Heart left ventricle (tissue), 16 donors: ENCODE measurements at regions of chr7 and their contacts with region 1.

Region 1: GRCh38 chr7:51263631-51264484 is 52.8 kb downstream of the COBL start:
- DNase-seq: no peak
- ATAC-seq: peak; percentile 43 to 80 (median 62)
- H3K4me3 ChIP-seq: no peak overlapping the region
- H3K27ac ChIP-seq: peak overlapping the region in 10 of 12 donors; percentile 20 to 72 (median 62)
- H3K4me1 ChIP-seq: peaks cover 0 to 41% (median 6%) of the 10 kb centered on the region in 12 donors
- H3K27me3 ChIP-seq: no peaks in the 10 kb centered on the region
- CTCF ChIP-seq: no peak
- POLR2A ChIP-seq: no peak

Region 2: GRCh38 chr7:50782384-50783208 is 481.3 kb before region 1 on chr7 and contains the start of gene GRB10:
- intact Hi-C with region 1: no loop called
- DNase-seq: peak in 4 of 5 donors; percentile 34 to 51 (median 48)
- ATAC-seq: peak; percentile 32 to 87 (median 69)
- H3K4me3 ChIP-seq: peak within 1 kb of the TSS; percentile 29 to 70 (median 58)
- H3K27ac ChIP-seq: peak within 1 kb of the TSS in 6 of 12 donors; percentile 39 to 61 (median 52)
- H3K4me1 ChIP-seq: peaks cover 0 to 63% (median 36%) of the 10 kb centered on the region in 12 donors
- H3K27me3 ChIP-seq: peaks cover 0 to 6% (median 0%) of the 10 kb centered on the region in 9 donors
- CTCF ChIP-seq: peak in 10 of 12 donors; percentile 16 to 52 (median 34)
- POLR2A ChIP-seq: no peak
- total RNA-seq, gene GRB10: 20.4 to 38.2 (median 29.1) TPM

Region 3: DNA sequence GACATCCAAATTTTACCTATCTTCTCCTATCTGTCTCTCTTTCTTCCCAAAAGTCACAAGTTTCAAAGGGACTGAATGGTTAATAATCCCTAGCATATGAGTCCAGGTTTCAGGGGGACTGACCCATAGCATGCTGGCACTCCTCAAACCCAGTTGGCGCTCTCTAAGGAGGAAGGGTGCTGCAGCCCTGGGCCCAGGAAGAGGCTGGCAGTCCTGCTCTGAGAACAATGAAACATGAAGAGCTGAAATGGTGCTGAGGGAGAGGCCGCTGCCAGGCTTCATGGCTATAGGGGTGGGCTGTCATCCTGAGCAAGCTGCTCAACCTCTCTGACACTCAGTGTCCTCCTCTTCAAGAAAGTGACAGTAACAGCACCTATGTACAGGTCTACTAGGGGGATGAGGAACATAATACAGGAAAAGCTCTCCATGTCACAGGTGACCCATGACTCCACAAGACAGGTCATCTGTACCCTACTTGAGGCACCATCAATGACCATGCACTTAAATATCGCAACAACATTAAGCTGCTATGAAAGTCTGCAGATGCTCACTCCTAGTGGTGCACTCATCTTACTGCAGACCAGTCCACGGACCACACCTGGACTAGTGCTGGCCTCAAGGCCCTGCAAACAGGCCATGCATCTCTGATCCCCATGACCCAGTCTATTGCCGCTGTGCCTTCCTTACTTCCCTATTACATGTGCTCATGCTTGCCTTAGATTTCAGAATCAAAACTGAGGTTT is 35.7 kb after region 1 on chr7:
- intact Hi-C with region 1: loop called in 1 of 10 experiments (anchors 5 kb)
- DNase-seq: no peak
- ATAC-seq: no peak
- H3K4me3 ChIP-seq: no peak overlapping the region
- H3K27ac ChIP-seq: peak overlapping the region in 1 of 12 donors; percentile 79
- H3K4me1 ChIP-seq: peaks cover 0 to 46% (median 17%) of the 10 kb centered on the region in 12 donors
- H3K27me3 ChIP-seq: no peaks in the 10 kb centered on the region
- CTCF ChIP-seq: peak in 1 of 12 donors; percentile 11
- POLR2A ChIP-seq: no peak

Region 4: GRCh38 chr7:51308265-51308664 is 44.4 kb after region 1 on chr7:
- intact Hi-C with region 1: loop called in 2 of 10 experiments (anchors 5 kb)
- DNase-seq: no peak
- ATAC-seq: peak in 3 of 4 donors; percentile 16 to 58 (median 55)
- H3K4me3 ChIP-seq: no peak overlapping the region
- H3K27ac ChIP-seq: peak overlapping the region in 6 of 12 donors; percentile 3 to 47 (median 34)
- H3K4me1 ChIP-seq: peaks cover 0 to 41% (median 11%) of the 10 kb centered on the region in 12 donors
- H3K27me3 ChIP-seq: no peaks in the 10 kb centered on the region
- CTCF ChIP-seq: no peak
- POLR2A ChIP-seq: no peak

Region 5: DNA sequence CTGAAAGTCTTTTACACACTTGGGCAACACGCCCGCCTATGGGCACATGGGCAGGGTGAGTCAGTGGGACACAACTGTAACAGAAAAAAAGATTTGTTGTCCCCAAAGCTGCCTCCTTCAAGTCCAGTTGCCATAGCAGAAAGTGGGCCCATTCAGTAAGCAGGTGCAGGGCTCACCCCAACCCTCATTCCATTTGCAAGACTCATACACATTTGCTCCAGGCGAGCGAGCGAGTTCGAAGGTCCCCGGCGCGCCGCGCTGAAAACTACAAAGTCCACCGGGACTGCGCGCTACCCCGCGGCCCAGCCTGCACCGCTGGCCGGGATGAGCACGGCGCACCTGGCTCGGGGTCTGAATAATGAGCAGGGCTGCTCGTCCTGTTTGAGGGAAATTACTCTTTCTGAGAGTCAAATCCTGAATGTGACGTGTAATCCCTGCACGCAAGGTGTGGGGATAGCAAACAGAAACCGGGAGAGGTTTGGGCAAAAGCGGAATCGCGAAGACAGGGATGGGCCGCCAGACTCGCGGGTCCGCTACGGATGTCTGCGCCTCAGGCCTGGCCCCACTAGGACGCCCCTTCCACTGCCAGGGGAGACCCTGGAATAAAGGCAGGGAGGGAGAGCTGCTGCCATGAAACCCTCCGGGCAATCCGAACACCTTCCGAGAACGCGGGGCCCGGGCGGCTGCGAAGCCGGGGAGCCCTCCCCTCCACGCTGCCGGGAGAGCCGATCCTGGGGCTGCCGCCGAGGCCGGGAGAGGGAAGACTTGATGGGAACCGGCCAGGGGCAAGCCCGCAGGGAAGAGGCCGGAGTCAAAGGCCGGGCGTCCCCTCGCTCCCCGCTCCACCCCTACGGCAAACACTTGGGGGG is 51.8 kb after region 1 on chr7:
- intact Hi-C with region 1: loop called in 2 of 10 experiments (anchors 5 kb)
- DNase-seq: peak in 1 of 5 donors; percentile 68
- ATAC-seq: peak; percentile 27 to 63 (median 54)
- H3K4me3 ChIP-seq: peak overlapping the region; percentile 35 to 92 (median 61)
- H3K27ac ChIP-seq: peak overlapping the region; percentile 20 to 87 (median 66)
- H3K4me1 ChIP-seq: peaks cover 0 to 29% (median 5%) of the 10 kb centered on the region in 12 donors
- H3K27me3 ChIP-seq: peaks cover 0 to 43% (median 6%) of the 10 kb centered on the region in 9 donors
- CTCF ChIP-seq: no peak
- POLR2A ChIP-seq: no peak

Region 6: GRCh38 chr7:51357821-51358220 is 94.0 kb after region 1 on chr7:
- intact Hi-C with region 1: loop called in 4 of 10 experiments (anchors 5 to 10 kb)
- DNase-seq: no peak
- ATAC-seq: no peak
- H3K4me3 ChIP-seq: no peak overlapping the region
- H3K27ac ChIP-seq: peak overlapping the region in 6 of 12 donors; percentile 42 to 70 (median 62)
- H3K4me1 ChIP-seq: peaks cover 0 to 10% (median 0%) of the 10 kb centered on the region in 12 donors
- H3K27me3 ChIP-seq: no peaks in the 10 kb centered on the region
- CTCF ChIP-seq: peak in 5 of 12 donors; percentile 10 to 33 (median 14)
- POLR2A ChIP-seq: no peak